Dorsolateral prefrontal cortex (tissue), 120 donors: ENCODE measurements at regions of chr2 and their contacts with region 1.

Region 1: DNA sequence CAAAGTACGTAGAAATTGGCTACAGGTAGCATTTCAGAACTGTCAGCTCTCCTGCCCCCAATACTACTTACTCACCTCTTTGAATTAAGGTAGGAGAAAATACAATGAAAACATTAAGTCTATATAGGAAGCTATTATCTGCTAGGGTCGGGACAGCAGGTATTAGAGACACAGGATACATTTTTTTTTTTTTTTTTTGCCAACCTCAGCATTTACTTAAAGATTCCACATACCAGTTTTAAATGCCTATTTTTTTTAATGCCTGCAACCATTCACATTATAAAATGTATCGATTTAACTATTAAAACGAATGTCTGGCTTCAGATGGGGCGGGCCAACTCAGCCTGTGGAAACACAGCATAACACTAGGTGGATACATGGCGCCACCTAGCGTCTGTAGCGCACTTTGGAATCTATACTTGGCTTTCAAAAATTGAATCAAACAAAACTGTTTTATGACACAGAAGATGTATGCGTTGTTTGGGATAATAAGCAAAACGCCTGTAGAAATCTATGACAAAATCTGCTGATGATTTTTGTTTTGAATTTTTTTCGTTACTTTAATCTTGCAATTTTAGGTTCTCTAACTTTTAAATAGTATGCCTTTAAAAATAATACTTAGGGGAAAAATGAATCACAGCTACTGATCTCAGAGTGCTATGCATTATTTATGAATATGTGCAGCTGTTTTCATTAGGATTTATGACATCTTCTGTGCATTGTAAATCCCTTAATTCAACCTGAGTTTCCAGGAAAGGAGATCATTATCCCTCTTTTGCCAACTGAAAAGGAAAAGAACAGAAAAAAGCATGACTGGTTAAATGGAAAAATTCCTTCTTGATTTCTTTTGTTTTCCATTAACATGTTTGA is 261.0 kb downstream of the NYAP2 start:
- DNase-seq: peak; percentile 73 to 92 (median 80)
- H3K4me3 ChIP-seq: no peak overlapping the region
- H3K27ac ChIP-seq: no peak overlapping the region
- H3K27me3 ChIP-seq: no peaks in the 10 kb centered on the region
- CTCF ChIP-seq: peak; percentile 77 to 97 (median 90)

Region 2: DNA sequence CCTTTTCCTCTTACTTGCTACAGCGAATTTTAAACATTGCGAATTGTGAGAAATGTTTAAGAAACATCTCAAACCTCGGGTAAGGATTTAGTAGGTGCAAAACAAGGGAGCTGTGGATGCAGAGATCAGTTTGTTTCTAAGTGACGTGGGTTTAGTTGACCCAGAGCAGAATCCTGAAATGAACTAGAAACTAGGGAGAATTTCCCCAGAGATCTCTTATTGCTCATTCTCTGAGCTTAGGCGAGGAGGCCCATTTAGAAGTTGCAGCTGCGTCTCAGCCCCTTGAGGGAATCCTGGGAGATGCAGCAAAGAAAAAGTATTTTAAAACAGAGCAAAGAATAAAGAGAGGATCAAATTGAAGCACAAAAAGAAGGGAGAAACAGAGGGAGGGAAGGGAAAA is 1287.9 kb before region 1 on chr2:
- intact Hi-C with region 1: loop called in 1 of 2 experiments (anchors 5 kb)
- DNase-seq: no peak
- H3K4me3 ChIP-seq: no peak overlapping the region
- H3K27ac ChIP-seq: no peak overlapping the region
- H3K27me3 ChIP-seq: no peaks in the 10 kb centered on the region
- CTCF ChIP-seq: no peak

Region 3: GRCh38 chr2:225122583-225123486 is 537.7 kb before region 1 on chr2:
- intact Hi-C with region 1: loop called (anchors 2 to 5 kb)
- DNase-seq: peak in 1 of 10 donors; percentile 48
- H3K4me3 ChIP-seq: peak overlapping the region in 30 of 59 donors; percentile 1 to 52 (median 28)
- H3K27ac ChIP-seq: peak overlapping the region in 17 of 59 donors; percentile 2 to 57 (median 29)
- H3K27me3 ChIP-seq: no peaks in the 10 kb centered on the region
- CTCF ChIP-seq: peak; percentile 47 to 78 (median 66)